Caco-2 (cell line): ENCODE measurements at regions of chr10 and their contacts with region 1.

Region 1: DNA sequence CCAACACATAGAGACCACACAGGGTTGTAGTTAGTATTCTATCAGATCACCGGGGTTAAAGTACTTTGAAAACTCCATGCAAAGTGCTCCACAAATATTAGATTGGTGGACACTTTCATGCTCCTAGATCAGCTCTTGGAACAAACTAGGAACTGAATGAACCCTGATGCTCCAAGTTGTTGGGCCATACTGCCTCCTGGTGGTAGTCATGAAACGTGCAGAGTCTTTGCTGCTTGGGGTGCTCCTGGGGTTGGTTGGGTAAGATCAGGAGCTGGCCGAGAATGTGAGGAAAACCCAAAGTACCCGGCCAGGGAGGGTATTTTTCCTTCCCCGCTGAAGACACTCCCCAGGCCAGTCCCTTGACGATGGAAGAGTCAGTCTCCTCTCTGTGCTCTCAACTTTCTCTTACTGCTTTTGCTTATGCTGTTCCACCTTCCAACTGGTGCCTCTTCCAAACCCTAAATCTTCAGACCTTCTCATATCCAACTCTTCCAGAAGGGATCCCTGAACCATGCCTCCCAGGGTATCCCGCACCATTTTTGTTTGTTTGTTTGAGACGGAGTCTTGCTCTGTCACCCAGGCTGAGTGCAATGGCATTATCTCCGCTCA is 920 bp upstream of the RPEL1 start:
- DNase-seq: peak; percentile 67 to 76
- H3K4me3 ChIP-seq: no peak overlapping the region
- H3K4me3 Mint-ChIP-seq: no peak overlapping the region
- H3K27ac Mint-ChIP-seq: no peak overlapping the region
- H3K4me1 ChIP-seq: peaks cover 25% of the 10 kb centered on the region
- H3K4me1 Mint-ChIP-seq: peaks cover 26% of the 10 kb centered on the region
- H3K27me3 ChIP-seq: no peaks in the 10 kb centered on the region
- H3K27me3 Mint-ChIP-seq: no peaks in the 10 kb centered on the region
- CTCF ChIP-seq: peak; percentile 82 to 84

Region 2: DNA sequence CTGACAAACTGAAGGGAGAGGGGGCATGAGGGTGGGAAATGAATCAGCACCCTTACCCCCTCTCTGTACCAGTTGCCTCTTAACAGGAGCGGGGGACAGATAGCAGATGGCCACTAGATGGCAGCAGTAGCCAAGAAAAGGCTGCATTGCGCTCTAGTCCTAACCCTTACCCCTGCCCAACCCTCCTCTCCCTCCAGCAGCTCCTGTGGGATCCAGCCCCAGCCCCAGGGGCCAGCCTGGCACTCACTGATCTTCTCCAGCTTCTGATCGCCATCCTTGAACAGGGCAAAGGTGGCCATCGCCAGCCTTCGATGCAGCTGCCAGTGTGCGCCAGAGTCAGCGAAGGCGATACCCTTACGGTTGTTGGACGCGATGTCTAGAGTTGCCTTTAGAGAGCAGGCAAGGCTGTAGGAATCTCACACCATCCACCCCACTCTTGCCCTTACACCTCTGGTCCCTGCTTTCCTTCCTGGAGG is 409.7 kb before region 1 on chr10:
- CTCF ChIA-PET with region 1: no interaction called
- POLR2A ChIA-PET with region 1: no interaction called
- intact Hi-C with region 1: loop called (anchors 10 kb)
- DNase-seq: peak; percentile 82 to 84
- H3K4me3 ChIP-seq: no peak overlapping the region
- H3K4me3 Mint-ChIP-seq: no peak overlapping the region
- H3K27ac Mint-ChIP-seq: no peak overlapping the region
- H3K4me1 ChIP-seq: peaks cover 14% of the 10 kb centered on the region; the same call in 1 of the 2 replicates
- H3K4me1 Mint-ChIP-seq: peaks cover 16% of the 10 kb centered on the region
- H3K27me3 ChIP-seq: no peaks in the 10 kb centered on the region
- H3K27me3 Mint-ChIP-seq: no peaks in the 10 kb centered on the region
- CTCF ChIP-seq: peak; percentile 88 to 91

Region 3: GRCh38 chr10:103080891-103081581 is 163.7 kb before region 1 on chr10:
- CTCF ChIA-PET with region 1: interaction called, 3 read pairs
- POLR2A ChIA-PET with region 1: no interaction called
- intact Hi-C with region 1: loop called (anchors 10 kb)
- DNase-seq: no peak
- H3K4me3 ChIP-seq: no peak overlapping the region
- H3K4me3 Mint-ChIP-seq: no peak overlapping the region
- H3K27ac Mint-ChIP-seq: no peak overlapping the region
- H3K4me1 ChIP-seq: peaks cover 8% of the 10 kb centered on the region; the same call in 1 of the 2 replicates
- H3K4me1 Mint-ChIP-seq: no peaks in the 10 kb centered on the region
- H3K27me3 ChIP-seq: no peaks in the 10 kb centered on the region
- H3K27me3 Mint-ChIP-seq: no peaks in the 10 kb centered on the region
- CTCF ChIP-seq: no peak

Region 4: DNA sequence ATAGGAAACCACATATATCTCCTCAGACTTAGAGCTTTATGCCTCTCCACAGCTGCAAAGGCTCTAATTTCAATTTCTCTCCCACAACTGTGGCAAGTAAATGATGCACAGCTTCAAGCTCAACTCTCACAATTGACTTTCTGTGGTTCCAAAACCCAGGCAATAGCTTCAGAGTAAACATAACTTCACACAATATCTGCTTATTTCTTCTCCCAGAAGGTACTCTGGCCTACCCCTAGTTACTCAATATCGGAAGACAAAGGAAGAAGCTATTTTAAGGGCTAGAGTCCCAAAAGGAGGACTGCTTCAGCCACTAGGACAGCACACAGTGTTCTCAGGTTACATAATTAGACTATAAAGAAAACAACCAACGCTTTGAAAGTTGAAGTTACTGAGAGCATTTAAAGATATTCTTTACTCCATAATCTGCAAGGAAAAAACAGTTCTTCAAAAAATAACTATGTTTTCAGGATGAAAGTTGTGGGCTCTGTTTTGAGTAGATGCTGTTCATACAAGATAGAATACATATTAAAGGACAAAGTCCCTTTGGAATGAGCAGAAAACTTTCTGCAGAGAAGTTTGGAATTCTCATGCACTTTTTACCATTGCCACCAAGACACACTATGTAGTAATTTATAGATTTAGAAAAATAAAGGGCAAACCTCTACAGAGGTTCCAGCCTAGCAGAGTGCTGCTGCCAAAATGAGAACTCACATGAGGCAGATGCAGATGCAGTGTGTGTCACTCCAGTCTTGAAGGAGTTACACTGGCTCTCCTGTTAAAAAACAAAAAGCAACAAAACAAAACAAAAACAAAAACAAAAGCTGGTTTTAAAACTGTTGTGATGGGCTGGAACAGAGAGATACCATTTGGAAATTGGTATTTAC is 133.5 kb before region 1 on chr10:
- CTCF ChIA-PET with region 1: interaction called, 5 read pairs
- POLR2A ChIA-PET with region 1: no interaction called
- intact Hi-C with region 1: loop called (anchors 5 kb)
- DNase-seq: no peak
- H3K4me3 ChIP-seq: no peak overlapping the region
- H3K4me3 Mint-ChIP-seq: no peak overlapping the region
- H3K27ac Mint-ChIP-seq: no peak overlapping the region
- H3K4me1 ChIP-seq: peaks cover 31% of the 10 kb centered on the region
- H3K4me1 Mint-ChIP-seq: peaks cover 15% of the 10 kb centered on the region
- H3K27me3 ChIP-seq: no peaks in the 10 kb centered on the region
- H3K27me3 Mint-ChIP-seq: no peaks in the 10 kb centered on the region
- CTCF ChIP-seq: no peak

Region 5: DNA sequence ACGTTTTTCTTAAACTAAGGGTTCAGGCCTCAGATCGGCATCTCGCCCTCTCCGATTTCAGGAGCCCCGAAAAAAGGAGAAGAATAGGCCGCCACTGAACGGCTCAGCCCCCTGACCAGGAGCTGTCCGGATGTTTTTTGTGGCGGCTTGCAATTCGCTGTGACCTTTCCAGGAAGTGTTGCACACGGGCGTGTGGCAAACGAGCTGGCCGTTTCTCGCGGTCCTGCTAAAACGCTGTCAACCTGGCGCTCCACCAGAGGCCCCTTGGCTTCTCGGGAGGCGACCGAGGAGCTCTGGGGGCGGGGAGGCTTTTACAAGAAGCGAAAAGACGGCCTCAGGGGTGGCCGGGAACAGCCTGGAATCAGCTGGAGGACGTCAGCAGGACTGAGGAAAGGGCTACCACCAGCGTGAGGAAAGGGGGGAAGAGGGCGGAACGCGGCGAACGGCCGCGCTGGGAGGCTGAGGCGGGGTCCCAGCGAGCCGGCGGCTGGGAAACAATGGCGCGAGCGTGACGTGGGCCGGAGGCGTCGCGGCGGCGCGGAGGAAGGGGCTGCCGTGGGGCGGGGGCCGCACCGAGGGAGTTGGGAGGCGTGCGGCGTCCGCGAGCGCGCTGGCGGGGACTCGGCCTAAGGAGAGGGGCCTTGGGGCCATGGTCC is 52.2 kb before region 1 on chr10:
- CTCF ChIA-PET with region 1: interaction called, 19 read pairs
- POLR2A ChIA-PET with region 1: interaction called, 11 read pairs
- intact Hi-C with region 1: loop called (anchors 1 kb)
- DNase-seq: peak; percentile 80 to 84
- H3K4me3 ChIP-seq: peak overlapping the region; percentile 67
- H3K4me3 Mint-ChIP-seq: peak overlapping the region; percentile 94
- H3K27ac Mint-ChIP-seq: peak overlapping the region; percentile 98
- H3K4me1 ChIP-seq: peaks cover 20% of the 10 kb centered on the region
- H3K4me1 Mint-ChIP-seq: peaks cover 20% of the 10 kb centered on the region
- H3K27me3 ChIP-seq: no peaks in the 10 kb centered on the region
- H3K27me3 Mint-ChIP-seq: no peaks in the 10 kb centered on the region
- CTCF ChIP-seq: no peak

Region 6: DNA sequence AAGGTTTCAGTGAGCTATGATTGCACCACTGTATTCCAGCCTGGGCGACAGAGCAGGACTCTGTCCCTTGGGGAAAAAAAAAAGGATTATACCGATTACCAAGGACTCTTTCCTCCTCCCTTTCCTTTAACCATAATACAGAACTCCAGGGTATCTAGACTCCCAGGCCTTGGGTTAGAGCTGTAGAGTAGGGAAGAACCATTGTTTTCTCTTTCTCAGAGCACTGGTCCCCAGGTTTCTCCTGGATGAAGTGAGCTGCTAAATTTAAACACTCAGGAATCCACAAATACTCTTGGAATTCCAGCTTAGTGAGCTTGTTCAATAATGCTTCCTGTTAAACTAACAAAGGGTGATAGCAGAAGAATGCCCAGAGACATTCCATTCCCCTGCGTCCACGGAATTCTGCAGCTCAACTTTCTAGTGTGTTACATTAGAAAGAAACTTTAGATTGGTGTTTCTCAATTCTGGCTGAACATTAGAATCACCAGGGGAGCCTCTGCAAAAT is 13.7 kb before region 1 on chr10:
- CTCF ChIA-PET with region 1: interaction called, 17 read pairs
- POLR2A ChIA-PET with region 1: interaction called, 17 read pairs
- intact Hi-C with region 1: loop called (anchors 1 kb)
- DNase-seq: peak; percentile 81 to 89
- H3K4me3 ChIP-seq: no peak overlapping the region
- H3K4me3 Mint-ChIP-seq: peak overlapping the region; percentile 37
- H3K27ac Mint-ChIP-seq: peak overlapping the region; percentile 72
- H3K4me1 ChIP-seq: peaks cover 55% of the 10 kb centered on the region
- H3K4me1 Mint-ChIP-seq: peaks cover 23% of the 10 kb centered on the region
- H3K27me3 ChIP-seq: no peaks in the 10 kb centered on the region
- H3K27me3 Mint-ChIP-seq: no peaks in the 10 kb centered on the region
- CTCF ChIP-seq: no peak